ENCODE measurements at regions of chr19 and their contacts with region 1.

Region 1: GRCh38 chr19:46753420-46754155 is 7.3 kb upstream of the STRN4 start:
- DNase-seq: peak; percentile 78
- ATAC-seq: peak; percentile 82
- H3K4me3 ChIP-seq: no peak overlapping the region
- H3K4me3 Mint-ChIP-seq: no peak overlapping the region
- H3K27ac ChIP-seq: no peak overlapping the region
- H3K27ac Mint-ChIP-seq: peak overlapping the region; percentile 32
- H3K4me1 ChIP-seq: peaks cover 0 to 7% of the 10 kb centered on the region in 2 donors
- H3K4me1 Mint-ChIP-seq: peaks cover 18% of the 10 kb centered on the region
- H3K27me3 ChIP-seq: no peaks in the 10 kb centered on the region
- H3K27me3 Mint-ChIP-seq: no peaks in the 10 kb centered on the region
- CTCF ChIP-seq: peak; percentile 65

Region 2: GRCh38 chr19:46529622-46530462 is 223.7 kb before region 1 on chr19:
- CTCF ChIA-PET with region 1: interaction called, 21 read pairs
- POLR2A ChIA-PET with region 1: no interaction called
- intact Hi-C with region 1: loop called (anchors 1 kb)
- DNase-seq: peak; percentile 81
- ATAC-seq: peak; percentile 67
- H3K4me3 ChIP-seq: no peak overlapping the region
- H3K4me3 Mint-ChIP-seq: no peak overlapping the region
- H3K27ac ChIP-seq: no peak overlapping the region
- H3K27ac Mint-ChIP-seq: no peak overlapping the region
- H3K4me1 ChIP-seq: peaks cover 0 to 10% of the 10 kb centered on the region in 2 donors
- H3K4me1 Mint-ChIP-seq: peaks cover 10% of the 10 kb centered on the region
- H3K27me3 ChIP-seq: peaks cover 0 to 15% (median 3%) of the 10 kb centered on the region in 4 experiments
- H3K27me3 Mint-ChIP-seq: peaks cover 8% of the 10 kb centered on the region
- CTCF ChIP-seq: peak; percentile 98

Region 3: DNA sequence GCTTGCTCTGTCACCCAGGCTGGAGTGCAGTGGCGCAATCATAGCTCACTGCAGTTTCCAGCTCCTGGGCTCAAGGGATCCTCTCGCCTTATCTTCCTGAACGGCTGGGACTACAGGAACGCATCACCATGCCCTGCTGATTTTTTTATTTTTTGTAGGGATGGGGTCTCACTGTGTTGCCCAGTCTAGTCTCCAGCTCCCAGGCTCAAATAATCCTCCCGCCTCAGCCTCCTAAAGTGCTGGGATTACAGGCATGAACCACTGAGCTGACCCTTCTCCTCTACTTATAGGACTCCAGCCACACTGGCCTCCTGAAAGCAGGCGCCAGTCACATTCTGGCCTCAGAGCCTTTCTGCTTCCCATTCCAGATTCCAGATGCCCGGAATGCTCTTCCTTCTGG is 103.1 kb before region 1 on chr19:
- CTCF ChIA-PET with region 1: no interaction called
- POLR2A ChIA-PET with region 1: no interaction called
- intact Hi-C with region 1: no loop called
- DNase-seq: no peak
- ATAC-seq: no peak
- H3K4me3 ChIP-seq: no peak overlapping the region
- H3K4me3 Mint-ChIP-seq: no peak overlapping the region
- H3K27ac ChIP-seq: no peak overlapping the region
- H3K27ac Mint-ChIP-seq: no peak overlapping the region
- H3K4me1 ChIP-seq: peaks cover 8 to 9% of the 10 kb centered on the region in 2 donors
- H3K4me1 Mint-ChIP-seq: peaks cover 8% of the 10 kb centered on the region
- H3K27me3 ChIP-seq: peaks cover 0 to 58% (median 24%) of the 10 kb centered on the region in 4 experiments
- H3K27me3 Mint-ChIP-seq: peaks cover 59% of the 10 kb centered on the region
- CTCF ChIP-seq: no peak

Region 4: GRCh38 chr19:46704379-46705076 is 49.1 kb before region 1 on chr19:
- CTCF ChIA-PET with region 1: interaction called, 36 read pairs
- POLR2A ChIA-PET with region 1: interaction called, 7 read pairs
- intact Hi-C with region 1: loop called (anchors 1 kb)
- DNase-seq: peak; percentile 85
- ATAC-seq: peak; percentile 93
- H3K4me3 ChIP-seq: no peak overlapping the region
- H3K4me3 Mint-ChIP-seq: no peak overlapping the region
- H3K27ac ChIP-seq: peak overlapping the region in 1 of 2 donors; percentile 48
- H3K27ac Mint-ChIP-seq: peak overlapping the region; percentile 87
- H3K4me1 ChIP-seq: peaks cover 3 to 8% of the 10 kb centered on the region in 2 donors
- H3K4me1 Mint-ChIP-seq: peaks cover 13% of the 10 kb centered on the region
- H3K27me3 ChIP-seq: no peaks in the 10 kb centered on the region
- H3K27me3 Mint-ChIP-seq: no peaks in the 10 kb centered on the region
- CTCF ChIP-seq: peak; percentile 93

Region 5: DNA sequence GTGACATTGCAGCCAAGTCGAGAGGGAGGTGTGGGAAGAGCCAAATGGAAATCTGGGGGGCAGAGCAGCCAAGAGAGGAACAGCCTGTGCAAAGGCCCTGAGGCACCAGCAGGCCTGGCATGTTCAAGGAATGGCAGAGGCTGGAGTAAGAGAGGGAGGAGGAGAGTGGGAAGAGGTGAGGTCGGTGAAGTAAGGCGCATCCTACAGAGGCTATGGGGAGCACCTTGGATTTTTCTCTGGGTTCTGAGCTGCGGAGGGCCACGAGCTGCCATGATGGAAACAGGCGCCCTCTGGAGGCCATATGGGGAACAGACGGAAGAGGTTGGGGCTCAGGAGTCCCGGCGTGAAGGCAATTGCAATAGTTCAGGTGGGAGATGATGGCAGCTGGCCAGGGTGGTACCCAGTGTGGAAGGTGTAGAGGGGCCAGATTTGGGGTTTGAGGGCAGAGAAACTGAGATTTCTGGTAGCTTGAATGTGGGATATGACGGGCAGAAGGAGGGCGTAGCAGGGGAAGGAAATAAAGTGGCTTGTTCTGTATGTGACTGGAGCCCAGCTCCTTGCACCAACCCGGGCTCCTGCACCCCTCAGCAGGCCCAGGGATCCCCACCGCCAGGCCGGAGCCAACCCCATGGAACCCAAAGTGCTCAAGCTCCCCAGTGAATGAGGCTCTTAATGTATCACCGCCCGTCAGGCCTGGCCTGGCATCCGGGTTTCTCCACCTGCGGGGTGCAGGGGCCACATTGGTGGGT is 13.2 kb after region 1 on chr19:
- CTCF ChIA-PET with region 1: interaction called, 14 read pairs
- POLR2A ChIA-PET with region 1: no interaction called
- intact Hi-C with region 1: no loop called
- DNase-seq: peak; percentile 67
- ATAC-seq: peak; percentile 64
- H3K4me3 ChIP-seq: no peak overlapping the region
- H3K4me3 Mint-ChIP-seq: no peak overlapping the region
- H3K27ac ChIP-seq: no peak overlapping the region
- H3K27ac Mint-ChIP-seq: no peak overlapping the region
- H3K4me1 ChIP-seq: no peaks in the 10 kb centered on the region
- H3K4me1 Mint-ChIP-seq: peaks cover 2% of the 10 kb centered on the region
- H3K27me3 ChIP-seq: no peaks in the 10 kb centered on the region
- H3K27me3 Mint-ChIP-seq: no peaks in the 10 kb centered on the region
- CTCF ChIP-seq: peak; percentile 72

Region 6: DNA sequence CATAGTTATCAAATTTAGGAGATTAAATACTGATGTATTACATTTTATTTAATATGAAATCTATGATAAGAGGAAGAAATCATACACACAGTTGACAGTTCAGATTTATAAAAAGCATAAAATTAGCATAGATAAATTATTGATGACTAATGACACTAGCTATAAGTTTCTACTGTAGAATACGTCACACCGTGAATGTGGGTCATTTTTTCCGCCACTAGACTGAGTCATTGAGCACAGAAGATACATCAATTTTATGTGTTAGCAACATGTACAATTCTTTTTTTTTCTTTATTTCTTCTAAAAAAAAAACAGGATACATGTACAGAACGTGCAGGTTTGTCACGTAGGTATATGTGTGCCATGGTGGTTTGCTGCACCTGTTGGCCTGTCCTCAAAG is 74.9 kb after region 1 on chr19:
- CTCF ChIA-PET with region 1: interaction called, 26 read pairs
- POLR2A ChIA-PET with region 1: interaction called, 5 read pairs
- intact Hi-C with region 1: loop called (anchors 2 kb)
- DNase-seq: no peak
- ATAC-seq: no peak
- H3K4me3 ChIP-seq: no peak overlapping the region
- H3K4me3 Mint-ChIP-seq: no peak overlapping the region
- H3K27ac ChIP-seq: no peak overlapping the region
- H3K27ac Mint-ChIP-seq: no peak overlapping the region
- H3K4me1 ChIP-seq: peaks cover 23 to 25% of the 10 kb centered on the region in 2 donors
- H3K4me1 Mint-ChIP-seq: peaks cover 21% of the 10 kb centered on the region
- H3K27me3 ChIP-seq: no peaks in the 10 kb centered on the region
- H3K27me3 Mint-ChIP-seq: no peaks in the 10 kb centered on the region
- CTCF ChIP-seq: no peak

Region 7: DNA sequence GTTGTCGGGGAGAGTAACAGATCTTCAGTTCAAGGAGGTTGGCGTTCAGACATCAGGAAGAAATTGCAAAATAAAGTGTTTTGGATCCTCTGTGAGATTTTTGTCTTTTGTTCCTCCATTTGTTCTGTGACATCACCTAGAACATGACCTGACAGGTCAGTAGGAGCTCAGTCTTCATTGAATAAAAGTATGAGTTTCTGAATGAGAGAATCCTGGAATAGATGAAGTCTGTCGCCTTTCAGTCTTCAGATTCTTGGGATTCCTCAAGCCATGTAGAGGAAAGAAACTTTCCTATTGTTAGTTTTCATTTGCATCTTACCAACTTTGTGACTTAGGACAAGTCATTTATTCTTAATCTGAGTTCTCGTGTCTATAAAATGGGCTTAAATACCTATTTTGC is 121.6 kb after region 1 on chr19:
- CTCF ChIA-PET with region 1: no interaction called
- POLR2A ChIA-PET with region 1: no interaction called
- intact Hi-C with region 1: no loop called
- DNase-seq: no peak
- ATAC-seq: no peak
- H3K4me3 ChIP-seq: no peak overlapping the region
- H3K4me3 Mint-ChIP-seq: no peak overlapping the region
- H3K27ac ChIP-seq: no peak overlapping the region
- H3K27ac Mint-ChIP-seq: no peak overlapping the region
- H3K4me1 ChIP-seq: no peaks in the 10 kb centered on the region
- H3K4me1 Mint-ChIP-seq: no peaks in the 10 kb centered on the region
- H3K27me3 ChIP-seq: no peaks in the 10 kb centered on the region
- H3K27me3 Mint-ChIP-seq: no peaks in the 10 kb centered on the region
- CTCF ChIP-seq: no peak

Region 8: DNA sequence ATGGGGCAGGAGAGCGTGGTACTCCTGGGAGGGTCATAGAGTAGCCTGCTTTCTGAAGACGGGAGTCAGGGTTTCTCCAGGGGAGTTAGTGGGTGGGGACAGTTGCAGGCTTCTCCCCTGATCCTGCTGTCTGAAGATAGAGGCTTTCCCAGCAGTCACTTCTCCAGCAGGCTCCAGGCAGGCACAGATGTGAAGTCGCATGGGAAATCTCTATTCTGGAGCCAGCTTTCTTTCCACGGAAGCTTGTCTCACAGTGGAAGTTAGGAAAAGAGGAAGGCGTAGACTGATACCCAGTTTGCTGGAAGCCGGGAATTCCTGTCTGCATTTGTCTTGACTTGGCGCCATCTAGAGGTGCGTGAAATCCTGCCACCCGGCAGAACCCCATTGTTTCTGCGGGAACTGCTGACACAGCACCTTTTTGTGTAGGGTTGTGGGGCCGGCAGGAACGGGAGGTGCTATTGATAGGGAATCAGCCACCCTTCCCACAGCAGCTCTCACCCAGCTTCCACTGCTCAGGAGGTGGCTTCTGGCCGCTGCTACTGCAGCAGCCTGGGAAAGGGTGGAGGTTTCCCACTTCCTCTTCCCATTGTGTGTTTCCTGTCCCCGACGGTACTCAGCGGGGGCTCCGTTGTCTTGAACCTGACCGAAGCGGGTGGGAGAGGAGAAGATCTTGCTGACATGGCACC is 237.5 kb after region 1 on chr19:
- CTCF ChIA-PET with region 1: interaction called, 11 read pairs
- POLR2A ChIA-PET with region 1: no interaction called
- intact Hi-C with region 1: loop called (anchors 1 kb)
- DNase-seq: peak; percentile 51
- ATAC-seq: no peak
- H3K4me3 ChIP-seq: no peak overlapping the region
- H3K4me3 Mint-ChIP-seq: no peak overlapping the region
- H3K27ac ChIP-seq: no peak overlapping the region
- H3K27ac Mint-ChIP-seq: no peak overlapping the region
- H3K4me1 ChIP-seq: peaks cover 6 to 8% of the 10 kb centered on the region in 2 donors
- H3K4me1 Mint-ChIP-seq: peaks cover 10% of the 10 kb centered on the region
- H3K27me3 ChIP-seq: no peaks in the 10 kb centered on the region
- H3K27me3 Mint-ChIP-seq: no peaks in the 10 kb centered on the region
- CTCF ChIP-seq: peak; percentile 61

Measured in B cell (primary cell).